Activated naive CD4-positive, alpha-beta T cell treated with anti-CD3 and anti-CD28 coated beads, Interleukin-2, amount 10 ng/mL, durations not matched to agents 7 days and 5 days (primary cell): ENCODE measurements at regions of chr12 and their contacts with region 1.

Region 1: GRCh38 chr12:117836999-117837736 is 131.6 kb downstream of the KSR2 start:
- DNase-seq: peak; percentile 81
- H3K4me3 Mint-ChIP-seq: no peak overlapping the region
- H3K27ac Mint-ChIP-seq: no peak overlapping the region
- H3K4me1 Mint-ChIP-seq: peaks cover 5% of the 10 kb centered on the region
- H3K27me3 Mint-ChIP-seq: peaks cover 13% of the 10 kb centered on the region

Region 2: DNA sequence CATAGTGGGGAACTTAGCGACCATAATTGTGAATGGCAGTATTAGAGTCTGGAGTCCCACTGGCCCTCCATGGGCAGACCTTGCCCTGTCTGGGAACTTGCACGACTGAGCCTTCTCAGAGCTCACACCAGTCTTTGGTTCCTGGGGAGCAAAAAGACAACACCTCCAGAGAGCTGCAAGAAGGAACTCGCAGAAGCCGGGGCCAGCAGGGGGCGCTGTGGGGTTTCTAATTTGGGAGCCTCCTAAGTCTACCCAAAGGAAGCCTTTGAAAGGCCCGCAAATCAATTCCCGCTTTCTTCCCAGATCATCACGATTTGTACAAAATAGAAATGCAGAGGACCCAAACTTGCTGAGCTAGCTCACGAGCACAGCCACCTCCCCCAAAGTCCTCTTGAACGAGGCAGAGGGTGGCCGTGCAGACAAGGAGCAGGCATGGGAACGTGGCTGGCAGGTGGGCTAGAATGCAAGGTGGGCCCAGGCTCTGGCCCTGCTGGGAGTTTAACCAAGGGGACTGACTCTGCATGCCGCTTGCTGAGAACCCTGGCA is 600.6 kb before region 1 on chr12:
- CTCF ChIA-PET with region 1: interaction called, 11 read pairs
- DNase-seq: peak; percentile 88
- H3K4me3 Mint-ChIP-seq: no peak overlapping the region
- H3K27ac Mint-ChIP-seq: no peak overlapping the region
- H3K4me1 Mint-ChIP-seq: no peaks in the 10 kb centered on the region
- H3K27me3 Mint-ChIP-seq: peaks cover 10% of the 10 kb centered on the region

Region 3: GRCh38 chr12:117367011-117367638 is 470.0 kb before region 1 on chr12:
- CTCF ChIA-PET with region 1: interaction called, 18 read pairs
- DNase-seq: peak; percentile 71
- H3K4me3 Mint-ChIP-seq: no peak overlapping the region
- H3K27ac Mint-ChIP-seq: no peak overlapping the region
- H3K4me1 Mint-ChIP-seq: no peaks in the 10 kb centered on the region
- H3K27me3 Mint-ChIP-seq: peaks cover 25% of the 10 kb centered on the region

Region 4: DNA sequence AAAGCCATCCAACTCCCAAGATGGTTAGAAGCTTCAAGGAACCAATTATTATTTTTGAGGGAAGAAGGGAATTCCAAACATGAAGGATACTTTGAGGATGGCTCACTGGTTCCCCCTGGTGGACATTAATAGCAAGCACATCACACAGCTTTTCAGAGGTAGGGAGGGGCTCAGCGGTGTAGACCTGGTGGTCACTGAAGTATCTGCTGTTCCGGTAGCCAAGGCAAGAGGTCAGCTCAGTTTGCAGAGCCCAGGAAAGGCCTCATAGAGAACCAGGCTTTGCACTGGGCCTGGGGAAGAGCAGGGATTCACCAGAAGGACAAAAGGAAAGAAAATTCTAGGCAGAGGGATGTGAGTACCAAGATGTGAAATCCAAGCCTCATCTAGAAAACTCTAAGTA is 12.9 kb after region 1 on chr12:
- CTCF ChIA-PET with region 1: interaction called, 20 read pairs
- DNase-seq: no peak
- H3K4me3 Mint-ChIP-seq: no peak overlapping the region
- H3K27ac Mint-ChIP-seq: no peak overlapping the region
- H3K4me1 Mint-ChIP-seq: no peaks in the 10 kb centered on the region
- H3K27me3 Mint-ChIP-seq: peaks cover 16% of the 10 kb centered on the region

Region 5: DNA sequence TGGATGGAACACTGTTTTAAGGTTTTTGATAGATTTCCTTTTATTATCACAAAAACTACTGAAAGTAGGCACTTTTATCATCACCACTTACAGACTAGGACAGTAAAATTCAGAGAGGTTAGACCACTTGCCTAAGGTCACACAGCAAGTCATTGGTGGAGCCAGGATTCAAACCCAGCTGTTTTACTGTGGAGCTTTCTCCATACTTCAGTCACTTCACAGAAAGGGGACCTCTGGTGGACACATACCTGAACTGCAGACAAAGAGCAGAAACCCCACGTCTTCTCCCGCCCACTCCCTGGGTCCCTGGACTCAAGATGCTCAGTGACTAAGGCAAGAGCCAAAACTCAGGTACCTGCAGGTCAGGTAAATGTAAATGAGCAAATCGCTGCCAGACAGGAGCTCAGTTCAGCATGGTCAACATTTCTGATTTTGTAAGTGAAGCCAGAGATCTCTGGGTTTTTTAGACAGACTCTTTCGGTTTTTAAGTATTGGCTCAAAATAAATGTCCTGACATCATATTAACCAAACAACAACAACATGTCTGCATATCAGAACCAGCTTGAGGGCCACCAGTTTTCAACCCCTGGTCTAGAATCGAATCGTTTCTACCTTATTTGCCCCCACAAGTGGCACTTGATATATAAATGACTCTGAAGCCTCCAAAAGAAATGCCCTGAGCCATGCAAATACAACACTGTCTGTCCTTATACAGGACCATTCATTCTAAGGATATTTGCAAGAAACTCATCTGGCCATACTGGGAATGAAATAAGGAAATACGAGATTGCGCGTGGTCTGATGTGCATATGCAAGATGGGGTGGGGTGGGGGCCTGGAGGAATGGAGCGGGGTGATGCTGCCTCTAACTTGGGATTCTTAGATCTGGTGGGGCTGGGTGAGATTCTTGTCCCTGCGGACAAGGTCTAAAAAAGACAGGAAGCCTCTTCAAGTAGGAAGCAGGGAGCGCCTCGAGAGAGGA is 20.8 kb after region 1 on chr12:
- CTCF ChIA-PET with region 1: interaction called, 14 read pairs
- DNase-seq: peak; percentile 63
- H3K4me3 Mint-ChIP-seq: no peak overlapping the region
- H3K27ac Mint-ChIP-seq: no peak overlapping the region
- H3K4me1 Mint-ChIP-seq: no peaks in the 10 kb centered on the region
- H3K27me3 Mint-ChIP-seq: peaks cover 1% of the 10 kb centered on the region